Activated CD8-positive, alpha-beta memory T cell treated with anti-CD3 and anti-CD28 coated beads, Interleukin-2, amount 10 ng/mL, durations not matched to agents 7 days and 5 days (primary cell): ENCODE measurements at regions of chr11 and their contacts with region 1.

Region 1: DNA sequence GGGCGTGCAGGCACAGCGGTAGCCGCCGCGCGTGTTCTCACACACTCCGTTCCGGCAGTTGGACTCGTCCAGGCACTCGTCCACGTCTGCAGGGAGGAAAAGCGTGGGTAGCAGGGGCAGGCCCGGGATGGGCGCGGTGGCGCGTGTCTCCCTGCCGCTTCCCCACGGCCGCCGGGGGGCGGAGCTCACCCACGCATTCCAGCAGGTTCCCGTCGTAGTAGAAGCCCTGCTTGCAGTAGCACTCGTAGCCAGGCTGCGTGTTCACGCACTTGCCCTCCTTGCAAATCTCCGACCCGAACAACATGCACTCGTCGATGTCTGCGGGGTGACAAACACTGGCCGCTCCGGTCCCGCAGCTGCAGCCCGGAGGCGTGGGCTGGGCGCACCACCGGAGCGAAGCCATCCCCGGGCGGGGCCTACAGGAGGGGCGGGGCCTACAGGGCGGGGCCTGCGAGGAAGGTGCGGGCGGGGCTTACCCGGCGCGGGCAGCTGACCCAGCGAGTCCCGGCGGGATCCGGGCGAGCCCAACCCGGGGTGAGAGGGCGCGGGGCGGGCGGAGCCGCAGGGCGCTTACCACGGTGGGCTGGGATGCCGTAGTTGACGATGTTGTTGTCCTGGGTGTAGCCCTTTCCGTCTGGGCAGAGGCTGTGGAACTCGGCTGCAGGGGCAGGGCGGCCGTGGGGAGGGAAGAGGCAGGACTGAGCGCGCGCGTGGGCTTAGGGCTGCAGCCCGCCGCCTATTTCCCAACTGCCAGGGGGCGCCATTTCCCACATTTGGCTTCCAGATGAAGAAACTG is 15.6 kb downstream of the SCYL1 start:
- DNase-seq: peak; percentile 96
- ATAC-seq: peak; percentile 94
- H3K4me3 Mint-ChIP-seq: peak overlapping the region; percentile 81
- H3K27ac Mint-ChIP-seq: peak overlapping the region; percentile 82
- H3K4me1 Mint-ChIP-seq: peaks cover 9% of the 10 kb centered on the region
- H3K27me3 Mint-ChIP-seq: no peaks in the 10 kb centered on the region

Region 2: GRCh38 chr11:65530157-65530496 is 10.4 kb before region 1 on chr11:
- CTCF ChIA-PET with region 1: interaction called, 31 read pairs
- DNase-seq: peak; percentile 53
- ATAC-seq: peak; percentile 48
- H3K4me3 Mint-ChIP-seq: no peak overlapping the region
- H3K27ac Mint-ChIP-seq: peak overlapping the region; percentile 56
- H3K4me1 Mint-ChIP-seq: peaks cover 22% of the 10 kb centered on the region
- H3K27me3 Mint-ChIP-seq: no peaks in the 10 kb centered on the region

Region 3: DNA sequence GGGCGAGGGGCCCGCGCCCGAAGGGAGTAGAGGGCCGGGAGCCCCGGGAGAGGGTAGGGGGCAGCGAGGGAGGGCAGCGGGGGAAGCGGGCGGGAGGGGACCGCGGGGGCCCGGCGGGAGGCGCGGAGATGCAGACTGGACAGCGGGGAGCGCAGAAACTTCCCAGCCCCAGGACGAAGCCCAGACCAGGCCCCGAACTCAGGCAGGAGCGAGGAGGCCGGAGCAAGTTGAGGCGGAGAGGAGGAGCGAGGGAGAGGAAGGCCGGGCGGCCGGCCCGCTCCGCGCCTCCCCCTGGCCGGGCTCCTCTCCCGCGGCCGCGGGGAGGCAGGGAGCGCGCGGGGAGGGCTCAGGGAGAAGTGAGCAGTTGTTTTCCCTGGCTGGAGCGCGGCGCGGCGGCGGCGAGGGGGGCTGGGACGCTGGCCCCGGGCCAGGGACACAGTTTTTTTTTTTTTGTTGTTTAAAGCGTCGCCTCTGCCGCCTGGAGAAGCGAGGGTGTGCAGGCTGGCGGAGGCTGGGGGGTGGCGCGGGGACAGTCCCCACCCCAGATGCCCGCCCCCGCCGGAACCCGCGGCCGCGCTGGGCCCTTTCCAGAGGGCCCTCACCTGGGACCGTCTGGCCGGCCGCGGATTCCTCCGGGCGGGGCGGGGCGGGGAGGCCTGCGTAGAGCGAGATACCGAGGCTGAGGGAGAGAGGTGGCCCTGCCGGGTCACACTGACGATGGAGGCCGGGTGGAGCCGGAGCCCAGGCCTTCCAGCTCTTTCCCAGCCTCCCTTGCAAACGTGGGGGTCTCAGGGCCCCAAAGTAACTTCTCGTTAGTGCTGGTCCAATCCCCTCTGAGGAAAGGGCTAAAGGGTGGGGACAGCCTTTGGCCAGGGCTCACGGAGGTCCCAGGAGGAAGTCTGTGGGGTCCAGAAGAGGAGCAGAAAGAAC is 17.8 kb after region 1 on chr11 and contains the start of gene LTBP3:
- CTCF ChIA-PET with region 1: interaction called, 388 read pairs
- DNase-seq: no peak
- ATAC-seq: peak; percentile 56
- H3K4me3 Mint-ChIP-seq: peak within 1 kb of the TSS; percentile 70
- H3K27ac Mint-ChIP-seq: peak within 1 kb of the TSS; percentile 81
- H3K4me1 Mint-ChIP-seq: peaks cover 48% of the 10 kb centered on the region
- H3K27me3 Mint-ChIP-seq: no peaks in the 10 kb centered on the region
- total RNA-seq, gene LTBP3: 46.2 to 46.8 TPM

Region 4: GRCh38 chr11:65575568-65576231 is 35.2 kb after region 1 on chr11 and contains the start of gene EHBP1L1:
- CTCF ChIA-PET with region 1: interaction called, 388 read pairs
- DNase-seq: peak; percentile 89
- ATAC-seq: peak; percentile 40
- H3K4me3 Mint-ChIP-seq: peak within 1 kb of the TSS; percentile 84
- H3K27ac Mint-ChIP-seq: peak within 1 kb of the TSS; percentile 91
- H3K4me1 Mint-ChIP-seq: peaks cover 49% of the 10 kb centered on the region
- H3K27me3 Mint-ChIP-seq: no peaks in the 10 kb centered on the region
- total RNA-seq, gene EHBP1L1: 138 to 140 TPM

Region 5: DNA sequence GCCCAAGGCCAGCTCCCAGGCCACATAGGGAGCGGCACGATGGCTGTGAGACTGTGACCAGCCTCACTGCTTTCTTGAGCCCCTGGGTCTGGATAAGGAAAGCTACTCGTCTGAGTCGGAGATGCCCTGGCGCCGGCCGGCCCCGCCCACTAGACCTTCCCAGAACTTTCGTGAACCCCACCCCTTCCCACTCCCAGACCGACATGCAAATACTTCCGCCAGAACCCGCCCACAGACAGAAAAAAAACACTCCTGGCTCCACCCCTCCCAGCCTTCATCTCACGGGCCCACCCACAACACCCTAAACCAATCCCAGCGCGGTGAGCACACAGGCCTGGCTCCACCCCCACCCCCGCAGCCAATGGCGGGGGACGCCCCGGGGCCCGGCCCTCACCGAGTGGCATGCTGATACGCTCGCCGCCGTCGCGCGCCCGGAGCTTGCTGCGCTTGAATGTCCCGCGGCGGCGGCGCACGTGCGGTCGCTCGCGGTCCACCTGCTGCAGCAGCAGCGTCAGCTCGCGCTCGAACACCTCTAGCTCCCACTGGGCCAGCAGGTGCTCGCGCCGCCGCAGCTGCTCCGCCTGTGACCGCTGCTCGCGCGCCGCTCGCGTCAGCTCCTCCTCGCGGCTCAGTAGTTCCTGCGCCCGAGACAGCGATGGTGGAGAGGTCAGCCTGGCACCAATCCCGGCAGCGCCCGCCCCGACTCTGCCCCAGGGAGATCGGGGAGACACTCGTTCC is 66.5 kb after region 1 on chr11:
- CTCF ChIA-PET with region 1: interaction called, 15 read pairs
- DNase-seq: no peak
- ATAC-seq: no peak
- H3K4me3 Mint-ChIP-seq: no peak overlapping the region
- H3K27ac Mint-ChIP-seq: no peak overlapping the region
- H3K4me1 Mint-ChIP-seq: peaks cover 27% of the 10 kb centered on the region
- H3K27me3 Mint-ChIP-seq: no peaks in the 10 kb centered on the region